HAP-1 (cell line): ENCODE measurements at regions of chr12 and their contacts with region 1.

Region 1: DNA sequence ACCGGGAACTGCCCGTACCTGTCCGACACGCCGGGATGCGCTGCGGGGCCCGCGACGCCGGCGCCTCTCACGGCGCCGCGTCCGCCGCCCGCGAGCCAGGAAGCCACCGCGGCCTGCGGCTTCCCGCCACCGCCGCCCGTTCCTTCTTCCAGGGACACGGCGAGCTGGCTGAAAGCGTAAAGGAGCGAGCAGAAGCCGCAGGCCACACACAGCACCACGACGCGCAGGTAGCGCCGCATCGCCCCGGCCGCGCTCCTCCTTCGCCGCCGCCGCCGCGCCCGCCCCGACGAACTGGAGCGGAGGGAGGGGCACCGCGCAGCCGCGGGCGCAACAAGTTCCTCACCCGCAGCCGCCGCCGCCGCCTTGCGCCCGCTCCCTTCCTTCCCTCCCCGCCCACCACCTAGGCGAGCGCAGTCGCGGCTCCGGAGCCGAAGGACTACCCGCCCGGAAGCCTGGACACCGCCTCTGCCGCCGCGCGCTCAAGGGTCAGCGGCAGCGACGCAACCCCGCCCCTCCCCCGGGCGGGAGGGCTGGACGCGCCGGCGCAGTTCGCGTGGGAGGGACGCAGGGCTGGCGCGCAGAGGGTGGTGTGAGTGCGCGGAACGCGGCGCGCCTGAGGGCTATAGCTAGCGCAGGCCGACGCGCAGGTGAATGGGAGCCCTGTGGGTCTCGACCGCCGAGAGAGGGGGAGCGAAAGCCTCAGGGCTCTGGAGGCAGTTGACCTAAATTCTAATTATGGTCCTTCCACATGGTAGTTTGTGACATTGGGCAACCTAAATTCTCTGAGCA is at the start of gene GXYLT1:
- DNase-seq: peak; percentile 84 to 94
- H3K4me3 ChIP-seq: peak within 1 kb of the TSS; percentile 56
- H3K4me1 ChIP-seq: peaks cover 21% of the 10 kb centered on the region
- H3K27me3 ChIP-seq: no peaks in the 10 kb centered on the region

Region 2: GRCh38 chr12:42234970-42235369 is 90.4 kb after region 1 on chr12:
- in situ Hi-C with region 1: loop called (anchors 5 kb)
- DNase-seq: no peak
- H3K4me3 ChIP-seq: no peak overlapping the region
- H3K4me1 ChIP-seq: peaks cover 18% of the 10 kb centered on the region
- H3K27me3 ChIP-seq: no peaks in the 10 kb centered on the region

Region 3: DNA sequence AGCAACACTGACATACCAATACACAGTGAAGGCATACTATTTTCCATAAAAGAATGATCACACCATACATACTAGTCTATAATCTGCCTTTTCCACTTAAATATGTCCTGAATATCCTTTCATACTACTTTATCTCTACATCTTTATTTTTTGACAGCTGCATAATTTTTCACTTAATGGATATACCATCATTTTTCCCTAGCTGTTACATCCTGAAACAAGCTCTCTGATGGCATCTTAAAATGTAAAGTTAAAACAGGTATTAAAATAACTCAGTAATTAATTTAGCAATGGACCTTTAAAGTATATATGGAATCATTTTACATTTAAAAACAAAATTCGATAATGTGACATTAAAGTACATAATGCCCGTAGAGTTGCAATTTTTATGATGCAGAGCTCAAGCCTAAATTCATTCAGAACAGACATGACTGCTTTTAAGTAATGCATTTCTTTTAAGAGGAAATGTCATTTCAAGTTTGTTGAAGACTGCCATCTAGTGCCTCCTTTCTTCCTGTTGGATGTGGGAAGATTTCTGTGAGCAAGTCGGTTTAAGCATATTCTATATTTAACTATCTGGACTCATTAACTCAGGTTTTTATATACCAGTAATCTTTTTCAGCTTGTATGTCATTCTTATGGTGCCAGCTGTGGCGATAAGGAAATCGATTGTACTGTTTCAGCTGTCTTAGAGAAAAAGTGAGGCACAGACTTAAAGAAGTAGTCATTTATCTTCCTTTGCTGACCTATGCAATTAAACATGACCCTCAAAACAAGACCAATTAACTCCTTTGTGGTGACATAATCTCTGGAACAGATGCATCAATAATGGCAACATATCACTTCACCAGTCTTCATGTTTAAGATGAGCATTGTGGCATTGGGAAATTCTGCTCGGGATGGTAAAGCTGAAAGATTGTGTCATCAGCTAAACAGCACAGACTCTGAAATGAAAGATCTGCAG is 424.6 kb after region 1 on chr12:
- in situ Hi-C with region 1: loop called (anchors 25 kb)
- DNase-seq: peak in 1 of 2 experiments; percentile 76
- H3K4me3 ChIP-seq: no peak overlapping the region
- H3K4me1 ChIP-seq: peaks cover 32% of the 10 kb centered on the region
- H3K27me3 ChIP-seq: no peaks in the 10 kb centered on the region